Cardiac septum (tissue), 1 donor: ENCODE measurements at regions of chr14 and their contacts with region 1.

Region 1: DNA sequence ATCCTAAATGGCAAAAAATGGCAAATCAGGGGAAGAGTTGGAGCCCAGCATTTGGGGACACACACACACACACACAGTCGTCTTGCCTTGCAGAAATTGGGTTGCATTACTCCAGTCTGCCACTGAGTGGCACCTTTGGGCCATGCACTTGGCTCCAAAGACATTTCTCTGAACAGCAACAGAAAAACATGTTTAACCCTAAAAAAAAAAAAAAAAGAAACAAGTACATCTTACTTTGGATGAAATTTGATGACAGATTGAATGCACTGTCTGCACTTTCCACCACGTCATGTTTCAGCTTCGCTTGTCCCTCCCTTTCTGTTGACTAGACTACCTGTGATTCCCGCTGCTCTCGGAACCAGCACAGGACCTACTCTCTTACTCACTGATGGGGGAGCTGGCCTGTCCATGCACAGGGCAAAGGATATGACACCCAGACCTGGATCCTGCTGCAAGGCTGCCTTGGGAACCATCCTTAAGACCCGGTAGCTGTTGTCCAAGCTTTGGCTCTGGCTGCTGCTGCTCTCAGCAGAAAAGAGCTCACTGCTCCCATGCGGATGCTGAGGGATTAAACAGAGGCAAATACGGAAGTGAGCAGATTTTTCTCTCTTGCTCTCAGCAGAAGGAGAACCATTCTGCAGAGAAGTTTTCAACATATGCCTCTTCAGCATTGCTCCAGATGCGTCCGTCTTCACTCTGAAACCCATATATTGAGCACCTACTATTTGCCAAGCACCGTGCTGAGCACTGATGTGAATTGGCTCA is 376.8 kb downstream of the DPF3 start:
- DNase-seq: no peak

Region 2: GRCh38 chr14:72948481-72949138 is 431.5 kb after region 1 on chr14:
- intact Hi-C with region 1: loop called (anchors 2 kb)
- DNase-seq: no peak